ENCODE measurements at regions of chr1 and their contacts with region 1.

Region 1: GRCh38 chr1:48697066-48697707 is 79.5 kb downstream of the BEND5 start:
- DNase-seq: peak; percentile 48
- H3K4me3 ChIP-seq: no peak overlapping the region
- H3K27ac ChIP-seq: no peak overlapping the region
- H3K4me1 ChIP-seq: no peaks in the 10 kb centered on the region
- H3K27me3 ChIP-seq: peaks cover 88% of the 10 kb centered on the region
- CTCF ChIP-seq: peak; percentile 94

Region 2: DNA sequence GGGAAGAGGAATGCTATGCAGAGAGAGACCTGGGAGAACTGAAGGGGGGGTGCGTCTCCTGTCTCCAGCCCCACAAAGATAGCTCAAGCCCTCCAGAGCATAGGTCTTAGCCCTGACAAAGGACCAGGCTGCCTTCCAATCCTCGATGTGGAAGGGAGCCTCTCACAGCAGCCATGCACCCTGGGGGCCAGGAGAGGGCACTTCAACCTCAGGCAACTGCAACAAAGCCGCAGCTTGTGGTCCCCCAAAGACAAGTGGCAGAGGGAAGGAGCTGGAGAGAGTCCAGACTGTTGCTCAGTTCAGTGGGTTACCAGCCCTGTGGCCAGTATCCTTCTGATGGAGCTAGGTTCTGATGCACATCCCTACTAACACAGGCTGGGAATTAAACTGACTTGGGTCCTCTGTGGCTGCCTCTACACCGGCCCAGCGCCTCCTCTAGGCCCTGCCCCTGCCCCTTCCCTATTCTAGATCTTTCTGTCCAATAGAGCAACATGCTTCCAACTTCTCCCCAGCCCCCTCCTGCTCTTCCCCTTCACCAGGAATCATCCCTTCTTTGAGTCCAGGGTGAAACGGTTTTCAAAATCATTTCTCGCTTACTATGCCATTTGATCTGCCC is 124.4 kb before region 1 on chr1:
- intact Hi-C with region 1: loop called (anchors 10 kb)
- DNase-seq: peak; percentile 25
- H3K4me3 ChIP-seq: no peak overlapping the region
- H3K27ac ChIP-seq: no peak overlapping the region
- H3K4me1 ChIP-seq: no peaks in the 10 kb centered on the region
- H3K27me3 ChIP-seq: peaks cover 33% of the 10 kb centered on the region
- CTCF ChIP-seq: peak; percentile 67

Region 3: DNA sequence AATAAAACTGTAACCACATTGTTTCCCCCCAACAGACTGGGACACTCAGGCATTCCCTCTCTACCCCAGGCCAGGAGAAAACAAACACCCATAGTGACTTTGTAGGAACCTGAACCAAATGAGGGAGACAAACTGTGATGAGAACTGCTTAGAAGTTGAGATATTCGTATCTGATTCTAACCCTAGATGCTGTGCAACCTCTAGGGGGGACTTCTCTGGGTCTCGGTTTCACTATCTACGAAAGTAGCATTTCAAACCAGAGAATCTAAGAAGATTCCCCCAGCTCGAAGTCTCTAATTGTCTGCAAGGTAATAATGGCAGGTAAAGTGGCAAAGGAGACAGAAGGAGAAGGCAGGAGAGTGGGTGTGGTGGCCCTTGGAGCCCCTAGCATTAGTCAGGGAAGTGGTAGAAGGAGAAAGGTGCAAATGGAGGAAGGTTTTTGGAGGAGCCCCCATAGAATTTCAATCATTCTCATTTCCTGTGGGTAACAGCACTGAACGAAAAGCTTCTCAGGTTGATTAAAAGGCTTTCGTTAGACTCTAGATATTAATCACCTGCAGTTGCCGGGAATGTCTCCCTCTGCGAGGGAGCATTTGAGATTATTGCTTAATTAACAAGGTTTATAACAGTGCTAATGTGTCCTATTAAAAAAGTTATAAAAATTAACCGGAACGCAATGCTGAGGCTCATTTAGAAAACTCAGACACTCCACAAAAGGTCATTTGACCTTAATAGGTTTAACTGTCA is 33.1 kb after region 1 on chr1:
- intact Hi-C with region 1: no loop called
- DNase-seq: no peak
- H3K4me3 ChIP-seq: no peak overlapping the region
- H3K27ac ChIP-seq: no peak overlapping the region
- H3K4me1 ChIP-seq: no peaks in the 10 kb centered on the region
- H3K27me3 ChIP-seq: no peaks in the 10 kb centered on the region
- CTCF ChIP-seq: no peak

Measured in left ventricle myocardium inferior (tissue), 1 donor.